ENCODE measurements at regions of chr1 and their contacts with region 1.

Region 1: DNA sequence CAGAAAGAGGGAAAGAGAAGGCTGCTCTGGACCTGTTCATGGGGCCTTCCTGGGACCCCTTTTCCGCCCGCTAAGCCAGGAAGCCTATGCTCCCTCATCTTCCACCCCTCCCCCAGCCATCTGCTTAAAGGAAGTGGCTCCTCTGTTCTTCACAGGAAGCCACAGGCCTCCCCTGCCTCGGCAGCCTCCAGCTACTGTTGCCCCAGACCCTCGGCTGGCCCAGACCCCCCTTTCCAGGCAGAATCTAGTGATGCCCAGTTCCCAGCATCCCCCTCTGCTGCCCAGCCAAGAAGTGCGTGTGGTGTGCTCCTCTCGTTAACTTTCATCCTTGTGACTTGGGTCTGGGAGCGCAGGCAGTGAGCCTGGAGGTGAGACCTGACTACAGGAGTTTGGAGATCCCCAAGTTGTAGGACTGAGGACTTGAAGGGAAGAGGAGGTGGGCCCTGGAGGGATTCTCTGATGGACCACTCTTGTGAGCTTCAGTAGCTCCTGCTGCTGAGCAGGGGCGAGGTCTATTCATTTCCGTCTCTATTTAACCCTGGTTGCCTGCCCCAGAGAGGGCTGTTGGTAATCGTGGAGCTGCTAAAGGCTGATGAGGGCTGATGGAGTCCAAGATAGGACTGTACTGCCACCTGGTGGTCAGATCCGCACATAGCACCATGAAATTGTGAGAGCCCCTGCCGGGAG is 9.1 kb downstream of the IFI6 start:
- DNase-seq: peak; percentile 89

Region 2: DNA sequence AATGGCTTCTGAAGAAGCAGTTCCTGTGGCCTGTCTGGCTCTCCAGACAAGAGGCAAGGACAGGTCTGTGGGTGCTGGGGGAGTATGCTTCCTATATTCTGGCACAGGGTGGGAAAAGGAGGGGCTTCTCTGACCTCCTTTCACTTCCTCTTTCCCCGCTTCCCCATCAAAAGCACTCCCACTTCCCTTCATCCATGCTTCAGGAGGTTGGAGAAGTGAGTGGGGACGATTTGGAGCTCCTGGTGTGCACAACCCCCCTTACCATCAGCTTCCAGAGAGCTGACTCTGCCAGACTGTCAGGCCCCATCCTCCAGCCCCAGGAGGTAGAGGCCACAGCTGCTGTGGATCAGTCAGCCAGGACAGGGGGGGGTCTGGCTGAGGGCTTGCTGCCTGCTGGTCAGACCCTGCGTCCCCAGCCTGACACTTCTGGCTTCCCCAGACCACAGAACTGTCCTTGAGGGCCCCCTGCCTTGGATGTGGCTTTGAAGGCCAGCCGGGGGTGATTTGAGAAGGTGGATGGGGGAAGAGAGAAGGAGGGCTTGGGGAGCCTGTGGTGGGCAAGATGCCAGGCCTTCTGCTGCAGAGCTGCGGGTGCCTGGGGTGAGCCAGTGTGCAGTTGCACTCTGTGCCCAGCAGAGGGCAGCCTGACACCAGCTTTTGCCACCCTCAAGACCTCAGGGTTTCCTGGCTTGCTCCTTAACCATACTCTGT is 362.4 kb before region 1 on chr1:
- intact Hi-C with region 1: loop called (anchors 2 kb)
- DNase-seq: peak; percentile 92

Region 3: DNA sequence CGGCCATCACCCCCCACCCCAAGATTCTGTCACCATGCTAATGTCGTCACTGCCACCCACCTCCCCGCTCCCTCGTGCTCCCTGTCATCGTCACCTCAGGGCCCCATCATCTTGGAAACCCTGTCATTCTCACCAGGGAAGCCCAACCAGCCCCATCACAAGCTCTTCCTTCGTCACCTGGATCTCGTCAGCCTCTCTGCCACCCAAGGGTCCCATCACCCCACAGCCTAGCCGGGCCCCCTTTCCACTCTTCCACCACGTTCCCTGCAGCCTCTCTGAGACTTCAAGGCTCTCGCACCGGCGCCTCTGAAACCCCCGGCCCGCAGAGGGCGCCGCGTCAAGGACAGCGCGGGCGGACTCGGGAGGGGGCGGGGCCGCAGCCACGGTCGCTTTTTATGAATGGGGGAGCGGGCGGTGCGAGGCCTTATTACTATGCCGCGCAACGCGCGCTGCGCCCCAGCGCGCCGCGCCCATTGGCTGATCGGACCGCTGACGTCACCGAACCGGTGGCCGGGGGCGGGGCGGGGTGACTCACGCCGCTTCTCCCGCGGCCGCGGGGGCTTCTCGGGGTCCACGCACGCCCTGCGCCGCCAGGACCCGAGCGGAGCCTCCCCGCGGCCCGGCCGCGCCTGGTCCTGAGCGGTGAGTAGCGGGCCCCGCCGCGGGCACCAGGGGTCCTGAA is 270.6 kb before region 1 on chr1 and contains the start of gene GPR3:
- intact Hi-C with region 1: loop called (anchors 5 kb)
- DNase-seq: peak; percentile 94
- total RNA-seq, gene GPR3: 2.3 TPM

Region 4: DNA sequence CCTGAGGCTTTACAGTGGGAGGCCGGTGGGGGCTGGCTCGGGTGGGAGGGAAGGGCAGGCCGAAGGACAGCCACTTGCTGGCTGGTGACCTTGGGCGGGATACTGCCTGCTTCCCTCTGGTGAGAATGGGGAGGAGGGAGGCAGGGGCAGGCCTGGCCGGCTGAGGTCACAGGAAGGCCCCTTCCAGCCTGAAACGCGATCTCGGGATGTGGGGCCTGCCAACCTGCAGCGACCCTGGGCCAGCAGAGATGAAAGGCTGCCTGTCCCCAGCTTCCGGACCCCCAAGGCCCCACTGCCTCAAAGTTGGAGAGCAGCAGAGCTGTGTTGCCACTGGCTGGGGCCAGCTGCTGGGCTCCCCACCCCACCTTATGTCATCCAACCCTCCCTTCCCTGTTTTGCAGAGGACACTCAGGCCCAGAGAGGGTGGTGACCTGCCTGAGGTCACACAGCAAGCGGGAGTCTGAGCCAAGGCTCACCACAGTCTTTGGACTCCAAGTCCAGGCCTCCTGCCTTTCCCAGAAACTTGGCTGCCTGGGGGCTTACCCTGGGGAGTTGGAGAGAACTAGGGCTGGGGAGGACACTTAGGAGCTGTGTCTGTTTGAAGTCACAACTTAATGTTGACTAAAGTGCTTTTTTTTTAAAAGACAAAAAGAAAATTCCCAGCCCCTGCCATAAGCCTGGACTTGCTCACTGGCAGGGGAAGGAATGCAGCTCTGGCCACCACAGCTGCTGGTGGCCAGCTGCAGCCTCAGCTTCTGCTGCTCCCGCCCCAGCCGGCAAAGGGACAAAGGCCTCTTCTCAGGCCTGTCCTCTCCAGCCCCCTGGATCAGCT is 158.0 kb before region 1 on chr1:
- intact Hi-C with region 1: loop called (anchors 5 kb)
- DNase-seq: peak; percentile 92

Region 5: DNA sequence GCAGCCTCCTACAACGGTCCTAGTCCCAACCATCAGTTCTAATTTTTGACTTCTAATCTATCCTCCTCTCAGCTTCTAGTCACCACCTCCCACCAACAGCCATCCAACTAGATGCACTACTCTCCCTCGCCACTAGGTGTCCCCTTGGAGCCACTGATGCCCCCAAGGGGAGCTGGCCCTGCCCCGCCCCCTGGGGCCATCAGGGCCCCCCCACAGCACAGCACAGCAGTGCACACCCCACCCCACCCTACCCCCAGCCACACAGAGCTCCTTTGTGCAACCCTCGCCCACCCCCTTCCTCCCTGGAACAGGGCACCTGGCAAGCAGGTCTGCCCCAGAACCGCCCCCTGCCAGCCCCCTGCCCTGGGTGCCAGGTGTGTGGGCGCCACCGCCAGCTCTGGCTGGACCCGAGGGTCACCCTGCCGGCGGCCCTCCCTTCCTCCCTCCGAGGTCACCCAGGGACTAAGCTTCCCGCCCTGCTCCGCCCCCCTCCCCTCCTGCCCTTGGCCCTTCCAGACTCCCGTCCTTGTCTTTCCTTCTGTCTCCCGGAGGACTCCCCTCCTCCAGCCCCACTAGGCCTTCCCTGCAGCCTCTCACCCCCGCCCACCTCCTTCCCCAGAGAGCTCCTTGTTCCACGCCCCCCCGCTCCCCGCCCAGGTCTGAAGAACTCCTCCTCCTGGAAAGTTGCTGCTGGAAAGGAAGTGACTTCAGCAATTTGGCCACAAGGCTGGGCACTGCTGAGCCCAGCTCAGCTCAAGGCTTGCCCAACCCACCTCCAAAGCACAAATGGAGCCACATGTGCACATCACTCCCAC is 105.9 kb before region 1 on chr1:
- intact Hi-C with region 1: loop called (anchors 2 kb)
- DNase-seq: peak; percentile 93

Region 6: DNA sequence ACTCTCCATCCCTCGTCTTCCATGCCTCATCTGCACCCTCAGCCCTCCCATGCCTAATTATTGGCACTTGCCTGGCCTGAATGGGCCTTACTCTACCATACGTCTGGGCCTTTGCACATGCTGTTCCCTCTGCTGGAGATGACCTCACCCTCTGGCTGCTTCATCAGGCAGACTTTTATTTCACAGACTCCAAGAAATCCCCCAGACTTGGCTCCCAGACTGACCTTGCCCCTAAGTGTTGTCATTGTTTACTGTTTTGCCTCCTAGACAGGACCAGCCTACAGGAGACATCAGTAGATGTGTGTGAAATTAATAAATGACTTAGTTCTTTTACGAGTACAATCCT is 53.7 kb before region 1 on chr1:
- intact Hi-C with region 1: loop called (anchors 1 kb)
- DNase-seq: no peak

Region 7: DNA sequence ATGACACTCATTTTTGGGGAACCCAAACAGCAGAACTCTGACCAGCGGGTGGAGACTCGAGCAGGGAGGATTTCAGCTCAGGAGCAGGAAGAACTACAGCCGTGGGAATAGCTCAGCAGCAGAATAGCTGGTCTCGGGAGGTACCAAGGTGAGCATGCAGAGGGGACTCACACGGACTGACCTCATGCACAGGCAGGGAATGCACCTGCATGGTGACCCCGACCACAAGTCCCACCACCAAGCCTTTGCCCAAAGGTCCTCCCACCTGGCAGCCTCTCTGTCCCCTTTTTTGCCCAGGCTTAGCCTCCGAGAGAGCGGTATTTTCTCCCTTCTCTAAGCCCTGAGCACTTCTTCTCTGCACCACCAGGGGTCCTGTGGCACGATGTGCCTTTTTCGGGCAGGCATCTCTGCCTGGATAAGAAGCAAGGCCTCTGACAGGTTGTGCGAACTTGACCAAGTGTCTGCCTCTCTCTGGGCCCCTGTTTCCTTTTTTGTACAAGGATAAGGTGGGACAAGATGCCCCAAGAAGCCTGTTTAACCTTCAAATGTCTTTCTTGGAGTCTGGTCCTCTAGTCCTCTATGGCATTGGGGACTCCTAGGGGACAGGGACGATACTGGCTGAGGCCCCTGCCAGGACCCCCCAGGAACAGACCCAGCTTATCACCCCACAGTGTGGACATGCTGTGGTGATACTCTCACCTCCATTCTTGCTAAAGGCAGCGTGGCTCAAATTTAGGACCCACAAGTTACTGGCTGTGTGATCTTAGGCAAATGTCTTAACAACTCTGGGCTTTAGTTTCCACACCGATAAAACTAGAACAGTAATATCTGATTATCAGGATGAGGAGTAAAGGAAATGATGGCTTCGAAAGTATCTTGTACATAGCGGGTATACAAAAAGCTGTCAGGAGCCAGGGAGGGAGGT is 18.9 kb before region 1 on chr1:
- intact Hi-C with region 1: loop called (anchors 1 kb)
- DNase-seq: no peak